Left cardiac atrium (tissue), 4 donors: ENCODE measurements at regions of chr2 and their contacts with region 1.

Region 1: DNA sequence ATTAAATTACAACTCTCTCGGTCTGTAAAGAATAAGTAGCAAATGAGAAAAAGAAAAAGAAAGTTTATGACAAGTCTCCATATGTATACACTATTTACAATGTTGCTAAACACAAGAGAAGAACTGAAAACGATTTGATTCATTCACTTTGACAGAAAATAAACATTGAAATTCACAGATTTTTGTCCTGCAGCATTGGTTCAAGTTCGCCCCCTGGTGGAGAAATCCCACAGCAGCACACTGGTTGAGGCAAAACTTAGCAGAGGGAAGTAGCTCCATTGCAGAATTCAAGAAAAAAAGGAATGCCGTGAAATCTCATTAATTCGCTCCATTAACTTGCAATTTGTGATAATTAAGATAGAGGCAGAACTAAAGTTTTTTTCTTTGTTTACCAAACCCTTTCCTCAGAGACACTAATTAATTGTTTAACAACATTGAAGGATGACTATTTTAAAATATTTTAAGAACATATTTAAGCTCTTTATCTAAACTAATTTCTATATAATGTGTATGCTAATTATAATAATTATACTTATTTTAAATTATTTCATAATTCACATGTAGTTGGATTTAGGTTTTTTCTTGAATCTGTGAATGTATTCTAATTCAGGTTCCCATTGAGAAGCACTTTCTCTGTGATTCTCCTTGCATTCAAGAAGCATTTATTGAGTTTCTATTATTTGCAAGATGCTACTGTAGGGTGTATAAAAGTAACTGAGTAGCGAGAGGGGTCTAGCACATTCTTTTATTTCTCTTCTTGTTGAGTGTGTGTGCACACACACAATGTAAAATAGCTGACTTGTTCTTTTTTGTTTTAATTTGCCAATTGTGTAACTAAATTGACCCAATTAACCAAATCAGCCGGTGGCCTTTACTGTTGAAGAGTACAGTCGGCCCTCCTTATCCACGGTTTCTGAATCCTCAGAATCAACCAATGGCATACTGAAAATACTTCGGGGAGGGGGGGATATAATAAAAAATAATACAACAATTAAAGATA is 74.1 kb downstream of the COL4A3 start:
- DNase-seq: peak; percentile 75
- ATAC-seq: peak in 1 of 2 donors; percentile 39

Region 2: GRCh38 chr2:227125506-227125905 is 113.0 kb before region 1 on chr2:
- intact Hi-C with region 1: loop called (anchors 1 to 5 kb)
- DNase-seq: no peak
- ATAC-seq: no peak

Region 3: GRCh38 chr2:227130636-227131035 is 107.9 kb before region 1 on chr2:
- intact Hi-C with region 1: loop called (anchors 1 to 5 kb)
- DNase-seq: no peak
- ATAC-seq: no peak

Region 4: GRCh38 chr2:227163998-227164762 is 74.4 kb before region 1 on chr2 and contains the starts of genes COL4A3 and COL4A4:
- intact Hi-C with region 1: no loop called
- DNase-seq: peak; percentile 79
- ATAC-seq: peak; percentile 90 to 94
- total RNA-seq, gene COL4A3: 6.1 to 13.0 TPM
- total RNA-seq, gene COL4A4: 17.2 to 18.7 TPM

Region 5: GRCh38 chr2:227766373-227766883 is 527.9 kb after region 1 on chr2:
- intact Hi-C with region 1: no loop called
- DNase-seq: peak; percentile 84
- ATAC-seq: peak; percentile 98 to 99